Breast epithelium (tissue), 4 donors: ENCODE measurements at regions of chr15 and their contacts with region 1.

Region 1: GRCh38 chr15:67474405-67475110 is 46.4 kb upstream of the C15orf61 start:
- DNase-seq: no peak
- H3K4me3 ChIP-seq: no peak overlapping the region
- H3K27ac ChIP-seq: no peak overlapping the region
- H3K4me1 ChIP-seq: no peaks in the 10 kb centered on the region
- H3K27me3 ChIP-seq: no peaks in the 10 kb centered on the region
- CTCF ChIP-seq: no peak
- POLR2A ChIP-seq: no peak

Region 2: GRCh38 chr15:67501177-67501835 is 26.7 kb after region 1 on chr15:
- intact Hi-C with region 1: loop called (anchors 2 kb)
- DNase-seq: no peak
- H3K4me3 ChIP-seq: peak overlapping the region in 1 of 3 donors; percentile 28
- H3K27ac ChIP-seq: no peak overlapping the region
- H3K4me1 ChIP-seq: no peaks in the 10 kb centered on the region
- H3K27me3 ChIP-seq: no peaks in the 10 kb centered on the region
- CTCF ChIP-seq: no peak
- POLR2A ChIP-seq: no peak